ENCODE measurements at regions of chr9 and their contacts with region 1.

Region 1: GRCh38 chr9:87693986-87694755 is 31.7 kb upstream of the CTSL start:
- DNase-seq: no peak
- ATAC-seq: no peak
- H3K4me3 ChIP-seq: no peak overlapping the region
- H3K4me3 Mint-ChIP-seq: no peak overlapping the region
- H3K27ac ChIP-seq: no peak overlapping the region
- H3K27ac Mint-ChIP-seq: no peak overlapping the region
- H3K4me1 ChIP-seq: no peaks in the 10 kb centered on the region
- H3K4me1 Mint-ChIP-seq: no peaks in the 10 kb centered on the region
- H3K27me3 ChIP-seq: peaks cover 0 to 17% of the 10 kb centered on the region in 2 experiments
- H3K27me3 Mint-ChIP-seq: no peaks in the 10 kb centered on the region

Region 2: DNA sequence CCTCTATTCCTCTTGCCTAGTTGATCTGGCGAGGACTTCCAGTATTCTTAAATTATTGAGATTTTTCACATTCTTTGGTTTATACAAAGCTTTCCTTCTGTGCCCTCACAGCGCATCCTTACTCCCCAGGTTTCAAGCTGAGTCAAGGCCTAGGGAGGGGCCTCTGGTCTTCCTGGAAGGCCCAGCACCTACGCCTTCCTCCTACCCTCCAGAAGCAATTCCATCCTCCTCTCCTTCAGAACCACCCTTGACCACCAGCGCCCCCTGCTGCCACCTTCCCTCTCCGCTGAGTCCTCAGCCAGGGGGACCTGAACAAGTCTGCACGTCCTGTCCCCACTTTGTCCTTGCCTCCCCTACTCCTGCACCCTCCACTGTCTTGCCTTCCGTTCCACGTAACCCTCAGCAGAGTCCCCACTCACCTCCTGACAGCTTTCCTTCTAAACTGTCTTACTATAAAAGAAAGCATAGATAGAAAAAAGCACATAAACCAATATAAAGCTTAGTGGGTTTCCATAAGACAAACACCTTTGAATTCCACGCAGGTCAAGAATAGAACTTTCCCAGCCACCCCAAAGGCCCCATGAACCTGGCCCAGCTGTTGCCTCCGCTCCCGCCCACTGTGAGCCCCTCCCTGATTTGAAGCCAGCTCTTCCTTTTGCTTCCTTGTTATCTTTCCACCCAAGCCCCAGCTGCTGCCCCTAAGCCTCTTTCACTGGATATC is 31.2 kb before region 1 on chr9:
- CTCF ChIA-PET with region 1: no interaction called
- POLR2A ChIA-PET with region 1: no interaction called
- DNase-seq: peak in 17 of 35 experiments; percentile 8 to 43 (median 25)
- ATAC-seq: no peak
- H3K4me3 ChIP-seq: no peak overlapping the region
- H3K4me3 Mint-ChIP-seq: no peak overlapping the region
- H3K27ac ChIP-seq: no peak overlapping the region
- H3K27ac Mint-ChIP-seq: no peak overlapping the region
- H3K4me1 ChIP-seq: no peaks in the 10 kb centered on the region
- H3K4me1 Mint-ChIP-seq: no peaks in the 10 kb centered on the region
- H3K27me3 ChIP-seq: peaks cover 0 to 12% of the 10 kb centered on the region in 2 experiments
- H3K27me3 Mint-ChIP-seq: peaks cover 3 to 4% of the 10 kb centered on the region in 2 donors

Region 3: DNA sequence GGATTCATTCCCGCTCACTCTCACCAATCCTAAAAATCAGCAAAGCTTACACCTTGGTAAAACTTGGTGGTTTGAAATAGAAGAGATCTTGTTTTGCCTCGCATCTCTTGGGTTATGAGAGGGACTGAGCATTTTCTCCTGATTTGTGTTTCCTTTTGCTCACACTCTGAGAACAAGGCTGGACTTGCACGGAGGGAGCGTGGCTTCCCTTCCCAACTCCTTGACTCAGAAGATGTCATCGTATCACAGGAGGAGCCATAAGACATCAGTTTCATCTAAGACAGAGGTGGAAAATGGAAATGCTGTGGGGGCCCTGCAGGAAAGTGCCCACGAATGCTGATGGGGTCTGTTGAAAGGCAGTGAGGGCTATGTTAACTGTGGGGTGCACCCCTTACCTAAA is 69.1 kb after region 1 on chr9:
- CTCF ChIA-PET with region 1: no interaction called
- POLR2A ChIA-PET with region 1: no interaction called
- DNase-seq: no peak
- ATAC-seq: no peak
- H3K4me3 ChIP-seq: no peak overlapping the region
- H3K4me3 Mint-ChIP-seq: no peak overlapping the region
- H3K27ac ChIP-seq: no peak overlapping the region
- H3K27ac Mint-ChIP-seq: no peak overlapping the region
- H3K4me1 ChIP-seq: no peaks in the 10 kb centered on the region
- H3K4me1 Mint-ChIP-seq: no peaks in the 10 kb centered on the region
- H3K27me3 ChIP-seq: no peaks in the 10 kb centered on the region
- H3K27me3 Mint-ChIP-seq: peaks cover 6 to 13% of the 10 kb centered on the region in 2 donors

Region 4: GRCh38 chr9:87792831-87793288 is 98.7 kb after region 1 on chr9:
- CTCF ChIA-PET with region 1: no interaction called
- POLR2A ChIA-PET with region 1: no interaction called
- DNase-seq: peak in 14 of 35 experiments; percentile 1 to 44 (median 14)
- ATAC-seq: peak in 3 of 4 experiments; percentile 51 to 82 (median 58)
- H3K4me3 ChIP-seq: peak overlapping the region in 1 of 2 donors; percentile 0
- H3K4me3 Mint-ChIP-seq: no peak overlapping the region
- H3K27ac ChIP-seq: no peak overlapping the region
- H3K27ac Mint-ChIP-seq: peak overlapping the region in 1 of 2 donors; percentile 6
- H3K4me1 ChIP-seq: peaks cover 2 to 6% of the 10 kb centered on the region in 2 experiments
- H3K4me1 Mint-ChIP-seq: peaks cover 0 to 25% (median 9%) of the 10 kb centered on the region in 3 donors
- H3K27me3 ChIP-seq: no peaks in the 10 kb centered on the region
- H3K27me3 Mint-ChIP-seq: peaks cover 0 to 3% of the 10 kb centered on the region in 2 donors

Region 5: GRCh38 chr9:88143957-88144625 is 449.9 kb after region 1 on chr9:
- CTCF ChIA-PET with region 1: interaction called in 1 of 2 experiments, 18 read pairs
- POLR2A ChIA-PET with region 1: no interaction called
- DNase-seq: no peak
- ATAC-seq: no peak
- H3K4me3 ChIP-seq: no peak overlapping the region
- H3K4me3 Mint-ChIP-seq: no peak overlapping the region
- H3K27ac ChIP-seq: no peak overlapping the region
- H3K27ac Mint-ChIP-seq: no peak overlapping the region
- H3K4me1 ChIP-seq: no peaks in the 10 kb centered on the region
- H3K4me1 Mint-ChIP-seq: peaks cover 0 to 3% (median 0%) of the 10 kb centered on the region in 3 donors
- H3K27me3 ChIP-seq: peaks cover 2 to 3% of the 10 kb centered on the region in 2 experiments
- H3K27me3 Mint-ChIP-seq: peaks cover 30 to 37% of the 10 kb centered on the region in 2 donors